Dorsolateral prefrontal cortex (tissue), 120 donors: ENCODE measurements at regions of chr13 and their contacts with region 1.

Region 1: DNA sequence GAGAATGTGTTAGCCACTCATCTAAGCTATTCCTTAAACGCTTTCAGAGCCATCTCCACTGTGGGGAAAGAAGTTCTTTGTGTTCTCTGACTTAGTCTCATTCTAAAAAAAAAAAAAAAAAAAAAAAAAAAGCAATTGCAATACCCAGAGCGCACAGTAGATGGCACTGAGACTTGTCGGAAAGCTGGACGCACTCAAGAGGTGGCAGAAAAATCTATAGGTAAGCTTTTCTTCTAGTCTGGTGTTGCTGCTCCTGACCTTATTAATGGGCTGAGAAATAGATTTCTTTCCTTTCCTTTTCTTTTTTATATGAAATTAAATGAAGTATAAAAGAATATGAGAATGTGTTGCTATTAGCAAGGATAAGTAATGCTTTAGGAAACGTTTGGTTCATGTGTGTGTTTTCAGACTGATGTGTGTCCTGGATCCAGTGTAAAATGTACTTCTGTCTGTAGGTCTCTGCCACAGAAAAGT is 4.7 kb upstream of the GJB2 start:
- DNase-seq: no peak
- H3K4me3 ChIP-seq: peak overlapping the region in 15 of 59 donors; percentile 4 to 38 (median 16)
- H3K27ac ChIP-seq: no peak overlapping the region
- H3K27me3 ChIP-seq: peaks cover 0 to 48% (median 38%) of the 10 kb centered on the region in 45 donors
- CTCF ChIP-seq: peak; percentile 54 to 86 (median 75)

Region 2: DNA sequence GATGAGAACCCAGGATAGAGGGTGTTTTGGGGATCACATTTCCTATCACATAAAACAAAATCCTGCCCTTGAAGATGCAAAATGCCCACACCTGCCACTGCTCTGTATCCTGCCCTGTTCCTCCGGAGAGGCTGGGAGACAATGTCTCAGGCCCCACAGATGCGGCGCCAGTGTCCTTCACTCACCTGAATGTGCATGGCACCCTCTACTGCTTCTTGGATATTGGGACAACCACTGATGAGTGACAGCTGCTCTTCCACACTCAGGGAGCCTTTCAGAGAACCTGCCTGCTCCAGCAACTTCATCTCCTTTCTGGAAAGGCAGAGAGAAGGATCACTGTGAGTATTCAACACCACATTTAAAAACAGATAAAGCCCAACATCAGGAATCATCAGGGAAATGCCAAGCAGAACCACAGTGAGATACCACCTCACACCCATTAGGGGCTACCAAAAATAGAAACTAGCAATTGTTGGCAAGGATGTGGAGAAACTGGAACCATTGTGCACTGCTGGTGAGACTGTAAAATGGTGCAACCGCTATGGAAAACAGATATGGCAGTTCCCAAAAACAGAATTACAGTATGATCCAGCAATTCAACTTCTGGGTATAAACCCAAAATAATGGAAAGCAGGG is 291.9 kb after region 1 on chr13:
- intact Hi-C with region 1: loop called (anchors 5 kb)
- DNase-seq: peak in 2 of 10 donors; percentile 54 to 61
- H3K4me3 ChIP-seq: no peak overlapping the region
- H3K27ac ChIP-seq: peak overlapping the region in 5 of 59 donors; percentile 2 to 38 (median 13)
- H3K27me3 ChIP-seq: no peaks in the 10 kb centered on the region
- CTCF ChIP-seq: peak in 21 of 56 donors; percentile 10 to 77 (median 55)

Region 3: DNA sequence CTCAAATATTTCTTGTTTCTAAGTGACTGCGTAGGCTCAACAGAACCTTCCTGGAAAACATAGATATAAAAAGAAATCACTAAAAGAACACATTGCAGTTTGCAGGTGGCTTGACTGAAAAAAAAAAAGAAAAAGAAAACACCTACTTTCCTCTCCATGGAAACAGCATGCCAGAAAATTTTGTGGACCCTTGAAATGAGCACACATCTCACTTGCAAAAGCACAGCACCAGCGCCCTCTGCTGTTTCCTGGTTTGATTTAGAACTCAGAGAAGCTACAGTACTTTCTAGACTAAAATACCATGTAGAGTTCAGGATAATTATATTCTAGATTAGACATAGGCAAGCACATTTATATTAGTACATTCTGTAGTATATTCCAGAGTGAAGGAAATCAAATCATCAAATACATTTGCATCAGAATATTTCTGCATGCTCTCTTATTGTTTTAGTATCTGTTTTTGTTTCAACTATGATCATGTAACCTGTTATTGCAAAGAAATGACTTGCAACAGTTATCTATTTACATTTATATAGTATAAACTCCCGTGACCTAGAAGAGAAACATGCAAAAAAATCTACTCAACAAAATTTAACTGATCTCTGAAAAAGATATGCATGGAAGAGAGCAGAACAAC is 727.5 kb after region 1 on chr13:
- intact Hi-C with region 1: loop called in 1 of 2 experiments (anchors 5 kb)
- DNase-seq: peak; percentile 52 to 94 (median 75)
- H3K4me3 ChIP-seq: no peak overlapping the region
- H3K27ac ChIP-seq: peak overlapping the region in 2 of 59 donors; percentile 21 to 55
- H3K27me3 ChIP-seq: no peaks in the 10 kb centered on the region
- CTCF ChIP-seq: peak; percentile 70 to 94 (median 81)